ENCODE measurements at regions of chr10 and their contacts with region 1.

Region 1: GRCh38 chr10:95330966-95331453 is 40.2 kb upstream of the PDLIM1 start:
- DNase-seq: no peak
- H3K4me3 ChIP-seq: no peak overlapping the region
- H3K4me3 Mint-ChIP-seq: peak overlapping the region; percentile 10
- H3K27ac Mint-ChIP-seq: peak overlapping the region; percentile 73
- H3K4me1 ChIP-seq: peaks cover 62% of the 10 kb centered on the region
- H3K4me1 Mint-ChIP-seq: peaks cover 29% of the 10 kb centered on the region
- H3K27me3 ChIP-seq: no peaks in the 10 kb centered on the region
- H3K27me3 Mint-ChIP-seq: no peaks in the 10 kb centered on the region
- CTCF ChIP-seq: no peak

Region 2: DNA sequence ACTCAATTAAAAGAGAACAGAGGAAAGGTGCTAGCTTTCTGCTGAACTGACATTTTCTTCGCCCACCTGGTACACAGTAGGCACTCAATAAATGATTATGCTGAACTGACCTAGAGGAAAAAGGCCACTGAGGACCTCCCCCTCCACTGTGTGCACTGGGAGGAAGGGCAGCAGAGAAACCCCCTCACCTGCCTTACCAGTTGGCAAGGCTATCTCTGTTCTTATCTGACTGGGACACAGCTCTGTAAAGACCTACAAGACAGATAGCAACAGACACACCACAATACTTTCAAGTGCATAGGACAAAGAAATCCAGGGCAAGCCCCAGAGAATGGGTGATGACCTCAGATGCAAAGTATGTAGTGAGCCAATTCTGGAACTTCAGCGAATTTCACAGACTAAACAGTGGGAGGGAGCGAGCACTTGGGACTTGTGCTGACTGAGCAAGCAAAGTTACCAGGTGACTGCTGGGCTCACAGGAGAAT is 70.6 kb before region 1 on chr10:
- CTCF ChIA-PET with region 1: no interaction called
- POLR2A ChIA-PET with region 1: no interaction called
- intact Hi-C with region 1: loop called (anchors 2 kb)
- DNase-seq: peak; percentile 82 to 87
- H3K4me3 ChIP-seq: no peak overlapping the region
- H3K4me3 Mint-ChIP-seq: no peak overlapping the region
- H3K27ac Mint-ChIP-seq: peak overlapping the region; percentile 75
- H3K4me1 ChIP-seq: peaks cover 54% of the 10 kb centered on the region
- H3K4me1 Mint-ChIP-seq: peaks cover 54% of the 10 kb centered on the region
- H3K27me3 ChIP-seq: no peaks in the 10 kb centered on the region
- H3K27me3 Mint-ChIP-seq: no peaks in the 10 kb centered on the region
- CTCF ChIP-seq: no peak

Region 3: GRCh38 chr10:95290461-95291364 is 40.3 kb before region 1 on chr10 and contains the start of gene PDLIM1:
- CTCF ChIA-PET with region 1: no interaction called
- POLR2A ChIA-PET with region 1: no interaction called
- intact Hi-C with region 1: loop called (anchors 1 kb)
- DNase-seq: peak; percentile 78 to 88
- H3K4me3 ChIP-seq: peak within 1 kb of the TSS; percentile 89
- H3K4me3 Mint-ChIP-seq: peak within 1 kb of the TSS; percentile 82
- H3K27ac Mint-ChIP-seq: peak within 1 kb of the TSS; percentile 87
- H3K4me1 ChIP-seq: peaks cover 43% of the 10 kb centered on the region
- H3K4me1 Mint-ChIP-seq: peaks cover 27% of the 10 kb centered on the region
- H3K27me3 ChIP-seq: no peaks in the 10 kb centered on the region
- H3K27me3 Mint-ChIP-seq: no peaks in the 10 kb centered on the region
- CTCF ChIP-seq: no peak
- total RNA-seq, gene PDLIM1: 417 and 506 TPM in 2 replicates

Region 4: DNA sequence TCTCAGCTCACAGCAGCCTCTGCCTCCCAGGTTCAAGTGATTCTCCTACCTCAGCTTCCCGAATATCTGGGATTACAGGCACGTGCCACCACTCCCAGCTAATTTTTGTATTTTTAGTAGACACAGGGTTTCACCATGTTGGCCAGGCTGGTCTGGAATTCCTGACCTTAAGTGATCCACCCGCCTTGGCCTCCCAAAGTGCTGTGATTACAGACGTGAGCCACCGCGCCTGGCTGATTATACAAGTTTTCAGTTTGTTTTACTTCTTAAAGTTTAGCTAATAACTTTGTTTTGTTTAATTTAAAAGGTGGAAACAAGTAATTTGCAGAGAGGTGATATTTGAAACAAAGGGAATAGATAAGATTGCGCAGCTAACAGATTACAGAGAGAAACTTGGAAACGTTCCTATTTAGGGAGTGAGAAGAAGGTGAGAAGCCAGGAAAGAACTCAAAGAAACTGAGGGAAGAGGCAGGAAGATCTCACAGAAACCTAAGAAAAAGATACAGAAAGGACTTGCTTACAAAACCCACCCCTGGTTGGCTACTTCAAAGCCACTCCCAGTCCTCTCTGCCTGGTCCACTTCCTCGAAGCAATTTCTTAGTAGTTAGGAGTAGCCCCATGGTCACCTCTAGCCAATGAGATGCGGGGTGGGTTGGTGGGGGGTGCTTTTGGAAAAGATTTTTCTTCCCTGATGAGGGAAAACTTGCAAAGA is 25.2 kb before region 1 on chr10:
- CTCF ChIA-PET with region 1: no interaction called
- POLR2A ChIA-PET with region 1: no interaction called
- intact Hi-C with region 1: loop called (anchors 1 kb)
- DNase-seq: peak; percentile 34 to 56
- H3K4me3 ChIP-seq: no peak overlapping the region
- H3K4me3 Mint-ChIP-seq: peak overlapping the region; percentile 6
- H3K27ac Mint-ChIP-seq: peak overlapping the region; percentile 43
- H3K4me1 ChIP-seq: peaks cover 56% of the 10 kb centered on the region
- H3K4me1 Mint-ChIP-seq: peaks cover 28% of the 10 kb centered on the region
- H3K27me3 ChIP-seq: no peaks in the 10 kb centered on the region
- H3K27me3 Mint-ChIP-seq: no peaks in the 10 kb centered on the region
- CTCF ChIP-seq: no peak

Region 5: GRCh38 chr10:95346715-95347401 is 15.8 kb after region 1 on chr10:
- CTCF ChIA-PET with region 1: no interaction called
- POLR2A ChIA-PET with region 1: no interaction called
- intact Hi-C with region 1: loop called (anchors 1 kb)
- DNase-seq: peak; percentile 87 to 89
- H3K4me3 ChIP-seq: no peak overlapping the region
- H3K4me3 Mint-ChIP-seq: peak overlapping the region; percentile 57
- H3K27ac Mint-ChIP-seq: peak overlapping the region; percentile 93
- H3K4me1 ChIP-seq: peaks cover 66% of the 10 kb centered on the region
- H3K4me1 Mint-ChIP-seq: peaks cover 45% of the 10 kb centered on the region
- H3K27me3 ChIP-seq: no peaks in the 10 kb centered on the region
- H3K27me3 Mint-ChIP-seq: no peaks in the 10 kb centered on the region
- CTCF ChIP-seq: no peak

Region 6: GRCh38 chr10:95693668-95694534 is 362.9 kb after region 1 on chr10 and contains the start of gene TCTN3:
- CTCF ChIA-PET with region 1: no interaction called
- POLR2A ChIA-PET with region 1: no interaction called
- intact Hi-C with region 1: no loop called
- DNase-seq: peak; percentile 99
- H3K4me3 ChIP-seq: peak within 1 kb of the TSS; percentile 86
- H3K4me3 Mint-ChIP-seq: peak within 1 kb of the TSS; percentile 97
- H3K27ac Mint-ChIP-seq: peak within 1 kb of the TSS; percentile 99
- H3K4me1 ChIP-seq: 0 out of 2 replicates have a peak, but pooled peaks cover 2% of the 10 kb centered on the region
- H3K4me1 Mint-ChIP-seq: peaks cover 17% of the 10 kb centered on the region
- H3K27me3 ChIP-seq: no peaks in the 10 kb centered on the region
- H3K27me3 Mint-ChIP-seq: no peaks in the 10 kb centered on the region
- CTCF ChIP-seq: peak; percentile 98 to 99
- total RNA-seq, gene TCTN3: 49.2 and 52.1 TPM in 2 replicates

Measured in Caco-2 (cell line).